ENCODE measurements at regions of chr6 and their contacts with region 1.

Region 1: GRCh38 chr6:30396833-30397479 is 52.0 kb downstream of the RPP21 start:
- ATAC-seq: peak; percentile 90 to 100 (median 96)
- H3K4me3 ChIP-seq: no peak overlapping the region
- H3K27ac ChIP-seq: no peak overlapping the region
- H3K4me1 ChIP-seq: no peaks in the 10 kb centered on the region

Region 2: GRCh38 chr6:29153083-29153482 is 1243.9 kb before region 1 on chr6:
- in situ Hi-C with region 1: no loop called
- ATAC-seq: no peak
- H3K4me3 ChIP-seq: no peak overlapping the region
- H3K27ac ChIP-seq: no peak overlapping the region
- H3K4me1 ChIP-seq: no peaks in the 10 kb centered on the region

Region 3: DNA sequence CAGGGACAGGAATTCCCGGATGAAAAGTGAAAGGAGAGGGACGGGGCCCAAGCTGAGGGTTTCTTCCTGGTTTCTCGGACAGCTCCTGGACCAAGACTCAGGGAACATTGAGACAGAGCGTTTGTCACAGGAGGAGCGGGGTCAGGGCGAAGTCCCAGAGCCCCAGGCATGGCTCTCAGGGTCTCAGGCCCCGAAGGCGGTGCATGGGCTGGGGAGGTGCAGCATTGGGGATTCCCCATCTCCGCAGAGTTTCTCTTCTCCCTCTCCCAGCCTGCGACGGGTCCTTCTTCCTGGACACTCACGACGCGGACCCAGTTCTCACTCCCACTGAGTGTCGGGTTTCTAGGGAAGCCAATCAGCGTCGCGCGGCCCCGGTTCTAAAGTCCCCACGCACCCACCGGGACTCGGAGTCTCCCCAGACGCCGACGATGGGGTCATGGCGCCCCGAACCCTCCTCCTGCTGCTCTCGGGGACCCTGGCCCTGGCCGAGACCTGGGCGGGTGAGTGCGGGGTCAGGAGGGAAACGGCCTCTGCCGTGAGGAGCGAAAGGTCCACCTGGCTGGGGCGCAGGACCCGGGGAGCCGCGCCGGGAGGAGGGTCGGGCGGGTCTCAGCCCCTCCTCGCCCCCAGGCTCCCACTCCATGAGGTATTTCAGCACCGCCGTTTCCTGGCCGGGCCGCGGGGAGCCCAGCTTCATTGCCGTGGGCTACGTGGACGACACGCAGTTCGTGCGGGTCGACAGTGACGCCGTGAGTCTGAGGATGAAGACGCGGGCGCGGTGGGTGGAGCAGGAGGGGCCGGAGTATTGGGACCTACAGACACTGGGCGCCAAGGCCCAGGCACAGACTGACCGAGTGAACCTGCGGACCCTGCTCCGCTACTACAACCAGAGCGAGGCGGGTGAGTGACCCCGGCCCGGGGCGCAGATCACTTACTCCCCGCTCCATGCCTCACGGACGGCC is 390.5 kb before region 1 on chr6:
- in situ Hi-C with region 1: no loop called
- ATAC-seq: peak; percentile 67 to 84 (median 72)
- H3K4me3 ChIP-seq: peak overlapping the region in 3 of 5 donors; percentile 7 to 21 (median 9)
- H3K27ac ChIP-seq: no peak overlapping the region
- H3K4me1 ChIP-seq: peaks cover 0 to 8% of the 10 kb centered on the region in 2 donors

Region 4: DNA sequence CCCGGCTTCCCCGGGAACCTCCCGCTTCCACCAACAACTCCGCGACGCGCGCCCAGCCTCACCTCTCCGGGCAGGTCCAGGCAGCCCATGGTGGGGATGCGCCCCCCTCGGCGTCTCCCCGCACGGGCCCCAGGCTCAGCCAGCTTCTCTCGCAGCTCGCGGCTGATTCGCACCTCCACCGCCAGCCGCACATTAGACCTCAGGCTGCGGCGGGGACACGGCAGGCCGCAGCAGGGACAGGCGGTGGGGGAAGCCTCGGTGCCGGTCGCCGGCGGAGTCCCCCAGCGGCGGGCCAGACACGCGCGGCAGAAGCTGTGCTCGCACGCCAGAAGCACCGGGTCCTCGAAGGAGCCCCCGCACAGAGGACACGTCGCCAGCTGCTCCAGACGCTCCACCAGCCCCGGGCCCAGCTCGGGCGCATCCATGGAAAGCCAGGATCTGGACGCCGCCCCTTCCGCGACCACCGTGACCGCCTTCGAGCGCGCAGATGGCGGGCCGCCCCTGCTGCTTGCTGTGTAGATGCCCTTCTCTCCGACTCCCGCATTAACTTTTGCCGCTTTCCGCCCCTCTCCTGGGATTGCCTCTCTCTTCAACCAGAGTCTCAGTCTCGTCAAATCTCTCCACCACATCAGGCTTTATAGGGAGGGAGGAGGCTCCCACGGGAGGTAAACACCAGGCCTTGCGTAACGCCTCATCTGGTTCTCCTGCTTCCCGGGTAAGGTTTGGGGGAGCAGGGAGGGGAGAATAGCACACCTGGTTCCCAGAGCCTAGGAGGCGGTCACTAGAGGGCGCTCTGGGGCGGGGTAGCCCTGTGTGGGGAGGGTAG is 321.6 kb before region 1 on chr6 and contains the start of gene RNF39:
- in situ Hi-C with region 1: no loop called
- ATAC-seq: peak in 6 of 8 experiments; percentile 10 to 52 (median 42)
- H3K4me3 ChIP-seq: peak within 1 kb of the TSS; percentile 15 to 29 (median 18)
- H3K27ac ChIP-seq: no peak within 1 kb of the TSS
- H3K4me1 ChIP-seq: peaks cover 3 to 8% of the 10 kb centered on the region in 2 donors
- total RNA-seq, gene RNF39: 0.49 to 2.3 (median 1.1) TPM

Region 5: DNA sequence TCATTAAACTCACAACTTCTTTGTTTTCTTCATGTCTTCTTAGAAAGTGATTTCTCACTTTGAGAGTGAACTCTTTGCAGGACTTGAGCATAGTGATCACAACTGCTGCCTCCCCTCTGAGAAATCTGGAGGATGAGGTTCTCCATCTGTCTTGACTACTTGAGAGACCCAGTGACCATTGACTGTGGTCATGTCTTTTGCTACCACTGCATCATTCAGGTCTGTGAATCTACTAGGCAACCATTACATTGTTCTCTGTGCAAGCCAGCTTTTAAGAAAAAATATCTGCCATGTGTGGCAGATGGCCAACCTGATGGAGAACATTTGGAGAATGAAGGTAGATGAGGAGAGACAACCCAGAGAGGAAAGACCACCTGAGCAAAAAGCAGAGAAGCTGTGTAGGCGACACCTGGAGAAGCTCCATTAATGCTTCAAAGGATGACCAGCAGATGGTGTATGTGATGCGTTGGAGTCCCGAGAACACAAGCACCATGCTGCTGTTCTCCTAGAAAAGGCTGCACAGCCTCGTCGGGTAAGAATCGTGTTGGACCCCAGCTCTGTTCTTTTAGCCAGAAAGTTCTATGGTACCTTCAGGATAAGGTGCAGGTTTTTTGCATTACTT is 158.7 kb before region 1 on chr6:
- in situ Hi-C with region 1: loop called in 1 of 9 experiments (anchors 25 kb)
- ATAC-seq: peak in 3 of 8 experiments; percentile 55 to 89 (median 63)
- H3K4me3 ChIP-seq: no peak overlapping the region
- H3K27ac ChIP-seq: no peak overlapping the region
- H3K4me1 ChIP-seq: no peaks in the 10 kb centered on the region

Measured in motor neuron (in vitro differentiated cells).